ENCODE measurements at regions of chr4 and their contacts with region 1.

Region 1: DNA sequence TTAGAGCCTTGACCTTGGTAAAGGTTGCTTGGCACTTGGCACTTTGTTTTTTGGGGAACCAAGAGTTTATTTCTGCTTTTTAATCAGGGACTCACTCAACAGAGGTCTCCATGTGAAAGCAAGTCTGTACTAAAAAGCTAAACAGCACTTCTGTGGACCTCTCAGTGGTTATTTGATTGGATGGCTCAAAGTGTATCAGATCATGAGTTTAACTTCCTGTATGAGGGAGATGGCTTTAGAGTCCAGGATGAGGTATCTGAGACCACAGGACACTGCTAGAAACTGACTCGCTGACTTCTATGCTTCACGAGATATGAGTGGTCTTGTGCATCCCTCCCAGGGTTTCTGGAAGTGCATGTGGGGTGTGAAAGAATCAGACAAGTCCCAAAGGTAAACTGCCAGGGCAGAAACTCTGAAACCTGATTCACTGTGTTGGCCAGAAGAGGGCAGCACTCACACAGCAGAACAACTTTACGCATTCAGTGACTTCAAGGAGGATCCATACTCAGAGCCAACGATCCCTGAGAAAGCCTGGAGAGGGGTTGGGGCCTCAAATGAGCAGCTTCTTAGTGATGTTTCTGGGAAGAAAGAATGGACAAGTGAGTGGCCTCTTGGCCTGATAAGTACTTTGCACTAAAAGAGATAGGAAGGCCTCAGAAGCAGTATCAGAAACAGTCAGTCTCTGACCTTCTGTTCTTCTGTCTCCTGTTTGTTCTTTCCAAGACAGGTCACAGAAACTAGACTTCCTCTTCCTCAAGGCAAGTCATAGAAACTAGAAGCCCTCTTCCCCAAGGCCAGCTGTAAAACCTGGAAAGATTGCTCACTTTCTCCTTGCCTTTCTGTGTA is 220.3 kb upstream of the CXCL13 start:
- DNase-seq: peak; percentile 37 to 66
- ATAC-seq: peak; percentile 91

Region 2: GRCh38 chr4:77433418-77433733 is 48.0 kb after region 1 on chr4:
- intact Hi-C with region 1: loop called in 1 of 2 experiments (anchors 5 kb)
- DNase-seq: no peak
- ATAC-seq: peak; percentile 98

Region 3: DNA sequence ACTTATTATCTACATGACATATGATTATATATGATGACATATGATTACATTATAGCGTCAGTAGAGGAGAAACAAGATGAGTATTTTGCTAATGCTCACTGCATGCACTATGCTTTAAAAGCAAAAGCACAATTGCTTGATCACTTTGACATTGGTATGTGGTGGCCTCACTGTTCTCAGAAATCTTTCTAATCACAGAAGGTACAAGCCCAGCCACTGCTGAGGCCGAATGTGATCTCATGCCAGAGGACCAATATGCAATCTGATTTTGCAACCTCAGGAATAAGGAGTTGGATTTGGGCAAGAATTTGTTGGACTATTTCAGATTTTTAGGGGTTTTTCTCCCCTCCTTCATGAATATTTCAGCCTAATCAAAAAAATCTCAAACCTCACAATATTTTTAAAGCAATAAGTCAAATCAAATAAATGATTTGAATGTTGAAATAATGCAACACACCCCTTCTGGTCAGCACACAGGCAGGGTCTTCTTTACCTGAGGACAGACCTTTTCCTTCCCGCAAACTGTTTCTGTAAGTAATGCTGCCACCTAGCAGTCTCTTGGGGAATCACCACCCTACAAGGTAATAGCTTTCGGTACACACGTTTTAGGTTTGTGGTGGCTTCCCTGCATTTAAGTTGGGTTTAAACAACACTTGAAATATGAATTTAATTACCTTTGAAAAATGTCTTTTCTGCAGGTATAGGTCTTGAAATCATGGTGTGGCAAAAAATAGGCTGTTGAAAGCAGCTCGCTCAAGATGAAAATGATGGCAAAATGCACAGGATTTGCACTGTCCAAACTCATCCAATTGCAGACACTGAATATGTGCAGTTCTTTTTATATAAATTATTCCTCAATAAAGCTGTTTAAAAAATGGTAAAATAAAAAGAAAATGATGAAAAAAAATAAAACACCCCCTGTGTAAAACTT is 215.4 kb after region 1 on chr4:
- intact Hi-C with region 1: loop called in 1 of 2 experiments (anchors 5 kb)
- DNase-seq: peak in 1 of 2 donors; percentile 17
- ATAC-seq: peak; percentile 64

Region 4: GRCh38 chr4:77618383-77619122 is 233.2 kb after region 1 on chr4:
- intact Hi-C with region 1: loop called in 1 of 2 experiments (anchors 5 kb)
- DNase-seq: peak; percentile 69 to 70
- ATAC-seq: peak; percentile 98